ENCODE measurements at regions of chr7 and their contacts with region 1.

Region 1: DNA sequence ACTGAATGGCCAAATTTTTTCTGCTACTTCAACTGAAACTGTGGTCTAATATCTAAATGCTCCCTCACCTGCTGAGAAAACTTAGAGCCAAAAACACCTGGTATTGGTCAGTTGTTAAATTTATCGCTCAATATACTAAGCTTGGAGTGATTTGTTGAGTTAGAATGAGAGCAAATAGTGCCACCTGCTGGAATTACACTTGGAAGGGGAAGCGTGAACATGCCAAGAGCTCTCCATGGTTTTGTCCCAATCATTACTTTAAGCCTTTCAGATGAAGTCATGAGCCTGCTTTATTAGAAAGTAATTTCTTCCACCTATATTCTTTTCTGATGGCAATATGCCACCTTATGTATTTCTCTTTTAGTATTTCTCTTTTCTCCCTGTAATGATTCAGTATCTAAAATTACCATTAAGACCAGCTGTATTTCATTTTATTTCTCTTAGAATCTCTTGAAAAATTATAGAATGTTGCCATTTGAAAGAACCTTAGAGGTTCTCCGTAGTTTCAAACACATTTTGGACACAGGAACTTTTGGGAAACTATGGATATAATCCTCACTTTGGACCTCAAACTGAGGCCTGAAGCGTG is 447.8 kb upstream of the C7orf33 start:
- DNase-seq: peak; percentile 20
- H3K4me3 Mint-ChIP-seq: no peak overlapping the region
- H3K27ac Mint-ChIP-seq: no peak overlapping the region
- H3K4me1 Mint-ChIP-seq: no peaks in the 10 kb centered on the region
- H3K27me3 Mint-ChIP-seq: no peaks in the 10 kb centered on the region

Region 2: DNA sequence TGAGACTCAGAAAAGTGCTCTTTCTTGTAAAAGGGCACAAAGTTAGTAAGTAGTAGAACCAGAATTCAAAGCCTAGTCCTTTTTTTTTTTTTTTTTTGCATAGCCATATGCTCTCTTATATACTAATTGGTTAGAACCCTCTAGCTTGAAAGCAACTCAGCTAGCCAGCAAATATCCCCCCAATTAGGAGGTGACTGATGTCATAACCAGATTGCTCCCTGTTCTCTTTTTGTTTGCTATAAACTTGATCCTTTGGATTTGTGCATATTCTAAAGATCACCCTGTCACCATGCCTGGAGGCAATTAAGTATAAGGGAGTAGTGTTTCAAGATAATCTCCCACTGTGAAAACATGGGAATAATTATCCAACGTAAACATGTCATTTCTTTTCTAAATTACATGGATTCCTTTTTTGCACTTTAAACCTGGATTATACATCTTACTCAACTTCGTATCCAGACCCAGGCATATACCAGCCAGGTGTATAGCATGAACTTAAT is 1062.8 kb before region 1 on chr7:
- CTCF ChIA-PET with region 1: no interaction called
- intact Hi-C with region 1: loop called (anchors 5 kb)
- DNase-seq: no peak
- H3K4me3 Mint-ChIP-seq: no peak overlapping the region
- H3K27ac Mint-ChIP-seq: no peak overlapping the region
- H3K4me1 Mint-ChIP-seq: no peaks in the 10 kb centered on the region
- H3K27me3 Mint-ChIP-seq: no peaks in the 10 kb centered on the region

Region 3: DNA sequence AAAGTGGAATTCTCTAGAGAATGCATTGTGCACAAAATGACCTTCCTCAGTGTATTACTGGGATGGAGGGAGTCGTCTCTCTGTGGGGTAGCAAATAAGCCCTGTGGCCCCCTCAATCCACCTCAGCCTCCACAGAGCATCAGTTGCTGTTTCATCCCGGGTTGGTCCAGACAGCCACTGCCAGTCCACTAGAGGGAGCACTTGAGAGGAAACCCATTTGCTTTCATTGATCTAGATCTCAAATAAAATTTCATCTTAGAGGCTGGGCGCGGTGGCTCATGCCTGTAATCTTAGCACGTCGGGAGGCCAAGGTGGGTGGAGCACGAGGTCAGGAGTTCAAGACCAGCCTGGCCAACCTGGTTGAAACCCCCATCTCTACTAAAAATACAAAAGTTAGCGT is 897.5 kb before region 1 on chr7:
- CTCF ChIA-PET with region 1: no interaction called
- intact Hi-C with region 1: loop called (anchors 5 kb)
- DNase-seq: peak; percentile 28
- H3K4me3 Mint-ChIP-seq: no peak overlapping the region
- H3K27ac Mint-ChIP-seq: no peak overlapping the region
- H3K4me1 Mint-ChIP-seq: no peaks in the 10 kb centered on the region
- H3K27me3 Mint-ChIP-seq: no peaks in the 10 kb centered on the region

Region 4: GRCh38 chr7:147406521-147407135 is 736.1 kb before region 1 on chr7:
- CTCF ChIA-PET with region 1: no interaction called
- intact Hi-C with region 1: no loop called
- DNase-seq: no peak
- H3K4me3 Mint-ChIP-seq: no peak overlapping the region
- H3K27ac Mint-ChIP-seq: no peak overlapping the region
- H3K4me1 Mint-ChIP-seq: no peaks in the 10 kb centered on the region
- H3K27me3 Mint-ChIP-seq: no peaks in the 10 kb centered on the region

Region 5: GRCh38 chr7:147937428-147937827 is 205.3 kb before region 1 on chr7:
- CTCF ChIA-PET with region 1: no interaction called
- intact Hi-C with region 1: no loop called
- DNase-seq: no peak
- H3K4me3 Mint-ChIP-seq: no peak overlapping the region
- H3K27ac Mint-ChIP-seq: no peak overlapping the region
- H3K4me1 Mint-ChIP-seq: no peaks in the 10 kb centered on the region
- H3K27me3 Mint-ChIP-seq: no peaks in the 10 kb centered on the region